Activated T-helper 2 cell treated with anti-CD3 and anti-CD28 coated beads, Interferon-gamma antibody, Interleukin-2, Interleukin-4, amounts not matched to agents 10 μg/mL and 5 μg/mL and 100 μg/mL, durations not matched to agents 14 hours and 24 hours and 36 hours (primary cell): ENCODE measurements at regions of chr3 and their contacts with region 1.

Region 1: GRCh38 chr3:71087143-71088018 is 496.1 kb downstream of the FOXP1 start:
- DNase-seq: peak; percentile 31
- H3K4me3 Mint-ChIP-seq: peak overlapping the region; percentile 4
- H3K27ac Mint-ChIP-seq: peak overlapping the region; percentile 80
- H3K4me1 Mint-ChIP-seq: peaks cover 74% of the 10 kb centered on the region
- H3K27me3 Mint-ChIP-seq: no peaks in the 10 kb centered on the region

Region 2: DNA sequence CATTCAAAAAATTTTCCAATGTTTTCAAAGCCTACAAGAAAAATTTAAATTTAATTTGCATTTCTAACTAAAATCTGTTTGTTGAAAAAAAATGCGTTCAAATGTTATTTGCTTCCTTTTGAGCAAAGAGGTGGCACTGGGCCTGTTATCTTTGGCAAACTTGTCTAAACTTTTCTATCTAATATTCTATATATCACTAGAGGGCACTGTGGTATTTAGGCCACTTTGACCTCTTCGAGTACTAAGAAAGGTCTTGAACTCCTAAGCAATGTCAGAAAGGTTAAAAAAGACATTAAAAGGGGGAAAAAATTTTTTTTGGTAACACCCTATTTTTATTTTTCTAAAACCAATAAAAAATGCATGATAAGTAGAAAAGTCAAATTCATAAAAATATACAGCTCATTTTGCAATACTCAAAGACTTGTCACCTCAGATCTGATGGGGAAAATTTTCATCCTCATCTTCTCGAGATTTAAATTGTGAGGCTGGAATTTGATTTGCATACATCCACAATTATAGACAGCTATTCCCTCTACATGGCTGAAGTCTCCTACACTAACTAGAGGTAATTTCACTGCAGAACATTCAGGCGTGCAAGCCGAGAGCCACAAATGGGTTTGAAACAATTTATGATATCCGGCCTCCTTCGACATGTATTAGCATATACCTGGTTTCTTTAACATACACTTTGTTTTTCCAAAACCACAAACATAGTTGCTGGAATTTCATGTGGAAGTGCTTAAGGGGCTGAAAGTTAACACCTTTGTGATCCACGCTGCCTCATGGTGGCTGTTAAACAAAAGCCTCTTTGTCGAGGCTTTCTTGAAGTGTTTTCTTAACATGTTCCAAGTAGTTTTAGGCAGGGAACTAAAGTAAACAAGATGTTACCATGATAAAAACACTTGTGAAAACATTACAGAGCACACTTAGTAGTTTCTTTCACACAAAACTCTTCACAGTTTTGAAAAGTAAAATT is 80.3 kb before region 1 on chr3:
- intact Hi-C with region 1: loop called (anchors 1 kb)
- DNase-seq: no peak
- H3K4me3 Mint-ChIP-seq: no peak overlapping the region
- H3K27ac Mint-ChIP-seq: no peak overlapping the region
- H3K4me1 Mint-ChIP-seq: peaks cover 59% of the 10 kb centered on the region
- H3K27me3 Mint-ChIP-seq: no peaks in the 10 kb centered on the region

Region 3: DNA sequence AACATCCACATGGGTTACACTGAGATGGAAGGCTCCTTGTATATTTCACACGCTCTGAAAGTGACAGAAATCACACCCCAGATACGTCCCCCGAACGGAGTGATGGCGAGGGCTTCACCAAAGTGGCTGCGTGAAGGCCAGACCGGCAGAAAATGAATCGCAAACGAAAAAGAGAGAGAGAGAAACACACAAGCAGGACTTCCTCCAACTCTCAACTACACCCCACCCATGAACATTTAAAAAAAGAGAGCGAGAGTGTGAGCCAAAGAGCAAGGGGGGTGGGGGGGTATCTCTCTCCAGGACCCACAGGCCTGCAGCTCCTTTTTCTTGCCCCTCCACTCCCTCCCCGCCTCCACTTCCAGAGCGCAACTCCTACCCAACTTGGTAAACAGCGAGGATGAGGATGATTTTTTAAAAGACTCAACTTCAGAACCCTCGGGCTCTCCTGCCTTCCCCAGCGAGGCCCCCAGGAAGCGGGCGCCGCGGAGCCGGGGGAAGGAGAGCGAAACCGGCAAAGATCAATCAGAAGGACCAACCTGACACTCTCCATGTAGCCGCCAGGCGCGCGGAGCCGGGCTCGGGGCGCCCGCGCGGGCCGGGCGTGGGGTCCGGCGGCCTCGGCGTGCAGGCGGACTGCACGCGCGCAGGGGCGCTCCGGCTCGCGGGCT is 23.0 kb before region 1 on chr3:
- intact Hi-C with region 1: loop called (anchors 1 kb)
- DNase-seq: peak; percentile 68
- H3K4me3 Mint-ChIP-seq: no peak overlapping the region
- H3K27ac Mint-ChIP-seq: no peak overlapping the region
- H3K4me1 Mint-ChIP-seq: peaks cover 58% of the 10 kb centered on the region
- H3K27me3 Mint-ChIP-seq: no peaks in the 10 kb centered on the region

Region 4: GRCh38 chr3:71109241-71109976 is 22.0 kb after region 1 on chr3:
- intact Hi-C with region 1: loop called (anchors 2 kb)
- DNase-seq: no peak
- H3K4me3 Mint-ChIP-seq: no peak overlapping the region
- H3K27ac Mint-ChIP-seq: peak overlapping the region; percentile 56
- H3K4me1 Mint-ChIP-seq: peaks cover 63% of the 10 kb centered on the region
- H3K27me3 Mint-ChIP-seq: no peaks in the 10 kb centered on the region

Region 5: GRCh38 chr3:71195492-71195891 is 108.1 kb after region 1 on chr3:
- intact Hi-C with region 1: loop called (anchors 1 kb)
- DNase-seq: no peak
- H3K4me3 Mint-ChIP-seq: no peak overlapping the region
- H3K27ac Mint-ChIP-seq: no peak overlapping the region
- H3K4me1 Mint-ChIP-seq: peaks cover 53% of the 10 kb centered on the region
- H3K27me3 Mint-ChIP-seq: no peaks in the 10 kb centered on the region

Region 6: GRCh38 chr3:71360764-71361163 is 273.4 kb after region 1 on chr3:
- intact Hi-C with region 1: loop called (anchors 1 kb)
- DNase-seq: no peak
- H3K4me3 Mint-ChIP-seq: peak overlapping the region; percentile 52
- H3K27ac Mint-ChIP-seq: peak overlapping the region; percentile 96
- H3K4me1 Mint-ChIP-seq: peaks cover 79% of the 10 kb centered on the region
- H3K27me3 Mint-ChIP-seq: no peaks in the 10 kb centered on the region

Region 7: DNA sequence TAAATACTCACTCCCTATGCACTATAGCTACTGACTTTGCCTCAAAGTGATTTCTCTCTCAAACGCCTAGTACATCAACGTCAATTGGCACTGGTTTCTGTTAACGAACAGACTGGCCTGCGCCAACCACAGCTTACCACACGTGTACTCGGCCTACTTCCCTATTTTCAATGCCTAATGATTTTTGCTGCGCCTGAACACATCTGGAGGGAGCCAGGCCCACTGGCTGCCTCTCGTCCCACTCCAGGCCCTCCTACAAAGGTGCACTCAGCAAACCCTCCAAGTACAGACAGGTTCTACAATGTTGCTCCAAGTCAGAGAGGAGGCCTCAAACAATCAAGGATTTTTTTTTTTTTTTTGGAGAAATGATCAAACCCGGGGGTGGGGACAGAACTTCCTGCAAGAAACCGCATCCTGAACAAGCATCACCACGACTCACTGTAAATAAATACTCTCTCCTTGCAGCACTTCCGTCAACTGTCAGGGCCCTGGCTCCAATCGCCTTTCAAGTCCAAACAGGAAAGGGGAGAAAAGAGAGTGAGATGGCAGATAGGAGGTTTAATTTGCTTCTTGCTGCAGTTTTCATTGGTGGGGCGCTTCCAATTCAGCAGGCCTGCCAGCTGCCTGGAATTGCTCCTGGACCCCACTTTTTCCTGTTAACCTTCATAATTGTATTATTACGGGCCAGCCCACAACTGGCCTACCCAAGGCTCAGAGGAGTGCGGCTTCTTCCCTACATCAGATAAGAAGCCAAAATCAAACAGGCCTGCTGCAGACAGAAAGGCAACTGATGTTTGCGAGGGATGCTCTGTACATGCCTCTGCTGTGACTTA is 356.9 kb after region 1 on chr3:
- intact Hi-C with region 1: loop called (anchors 5 kb)
- DNase-seq: peak; percentile 79
- H3K4me3 Mint-ChIP-seq: peak overlapping the region; percentile 71
- H3K27ac Mint-ChIP-seq: peak overlapping the region; percentile 99
- H3K4me1 Mint-ChIP-seq: peaks cover 86% of the 10 kb centered on the region
- H3K27me3 Mint-ChIP-seq: no peaks in the 10 kb centered on the region